Sigmoid colon (tissue), 7 donors: ENCODE measurements at regions of chr5 and their contacts with region 1.

Region 1: DNA sequence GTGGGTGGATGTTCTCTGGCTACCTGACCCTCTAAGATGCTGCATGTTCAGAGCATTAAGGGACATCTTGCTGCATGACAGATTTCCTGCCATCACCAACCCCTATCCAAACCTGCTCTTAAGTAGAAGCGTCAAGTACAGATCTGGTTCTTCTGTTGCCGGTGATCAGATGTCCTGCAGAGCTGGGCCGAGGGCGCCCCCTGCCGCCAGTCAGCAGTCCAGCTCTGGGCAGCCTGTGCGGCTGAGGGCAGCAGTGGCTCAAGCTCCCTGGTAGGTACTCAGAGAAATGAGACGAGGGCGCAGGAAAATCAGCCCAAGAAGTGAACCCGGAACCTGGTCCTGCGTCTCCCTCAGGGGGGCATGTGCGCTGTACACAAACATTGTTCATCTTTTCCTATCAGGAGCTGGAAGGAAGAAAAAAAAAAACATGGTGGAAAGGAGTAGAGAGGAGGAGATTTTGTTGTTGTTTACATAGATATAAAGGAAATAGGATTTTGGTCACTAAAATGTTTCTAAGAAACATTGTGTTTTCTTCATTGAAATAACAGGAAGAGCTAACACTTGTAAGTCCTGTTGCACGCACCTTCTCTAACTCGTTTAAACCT is 95.8 kb downstream of the CFAP90 start:
- DNase-seq: no peak
- H3K4me3 ChIP-seq: no peak overlapping the region
- H3K27ac ChIP-seq: no peak overlapping the region
- H3K4me1 ChIP-seq: no peaks in the 10 kb centered on the region
- H3K27me3 ChIP-seq: no peaks in the 10 kb centered on the region
- CTCF ChIP-seq: peak; percentile 41 to 65 (median 47)
- EP300 ChIP-seq: no peak
- POLR2A ChIP-seq: no peak

Region 2: GRCh38 chr5:7251132-7251531 is 504.0 kb before region 1 on chr5:
- intact Hi-C with region 1: loop called (anchors 5 kb)
- DNase-seq: no peak
- H3K4me3 ChIP-seq: no peak overlapping the region
- H3K27ac ChIP-seq: peak overlapping the region in 1 of 4 donors; percentile 22
- H3K4me1 ChIP-seq: no peaks in the 10 kb centered on the region
- H3K27me3 ChIP-seq: no peaks in the 10 kb centered on the region
- CTCF ChIP-seq: no peak
- EP300 ChIP-seq: no peak
- POLR2A ChIP-seq: no peak

Region 3: DNA sequence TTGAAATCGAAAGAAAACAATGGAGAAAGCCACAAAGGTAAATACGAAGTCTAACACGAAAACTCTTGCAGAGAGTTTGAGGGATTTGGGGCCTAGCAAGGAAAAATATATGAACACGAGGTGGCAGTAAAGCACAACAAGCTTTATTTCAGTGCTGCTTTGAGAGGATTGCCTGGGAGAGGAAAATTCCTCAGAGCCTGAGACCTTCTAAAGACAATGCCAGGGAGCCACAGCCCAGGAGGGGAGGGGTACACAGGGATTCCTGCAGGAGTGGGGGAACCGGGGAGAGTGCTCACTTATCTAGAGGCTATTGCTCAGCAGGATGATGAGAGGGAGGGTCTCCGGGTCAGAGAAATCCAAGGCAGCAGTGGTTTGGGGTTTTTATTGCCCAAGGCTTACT is 494.0 kb before region 1 on chr5:
- intact Hi-C with region 1: loop called (anchors 5 kb)
- DNase-seq: no peak
- H3K4me3 ChIP-seq: no peak overlapping the region
- H3K27ac ChIP-seq: no peak overlapping the region
- H3K4me1 ChIP-seq: no peaks in the 10 kb centered on the region
- H3K27me3 ChIP-seq: no peaks in the 10 kb centered on the region
- CTCF ChIP-seq: peak; percentile 10 to 51 (median 34)
- EP300 ChIP-seq: no peak
- POLR2A ChIP-seq: no peak

Region 4: DNA sequence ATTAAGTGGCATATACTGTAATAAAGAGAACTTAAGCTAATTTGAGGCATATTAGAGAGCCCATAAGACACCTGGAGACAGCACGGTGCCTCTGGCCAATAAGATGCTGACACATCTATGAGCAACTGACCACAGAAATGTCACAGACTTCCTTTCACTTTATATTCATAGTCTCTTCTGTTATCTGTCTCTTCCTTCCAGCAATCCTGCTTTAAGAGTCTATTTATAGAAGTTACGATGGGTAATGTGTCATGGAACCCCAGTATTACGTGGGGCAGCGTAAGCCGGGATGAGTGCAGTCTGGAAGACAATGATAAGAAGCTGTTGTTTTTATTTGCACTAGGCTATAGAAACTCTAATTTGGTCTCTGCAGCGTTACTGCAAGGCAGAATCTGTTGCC is 41.0 kb before region 1 on chr5:
- intact Hi-C with region 1: no loop called
- DNase-seq: no peak
- H3K4me3 ChIP-seq: no peak overlapping the region
- H3K27ac ChIP-seq: no peak overlapping the region
- H3K4me1 ChIP-seq: no peaks in the 10 kb centered on the region
- H3K27me3 ChIP-seq: no peaks in the 10 kb centered on the region
- CTCF ChIP-seq: no peak
- EP300 ChIP-seq: no peak
- POLR2A ChIP-seq: no peak

Region 5: GRCh38 chr5:8660133-8660893 is 905.2 kb after region 1 on chr5:
- intact Hi-C with region 1: no loop called
- DNase-seq: no peak
- H3K4me3 ChIP-seq: no peak overlapping the region
- H3K27ac ChIP-seq: no peak overlapping the region
- H3K4me1 ChIP-seq: no peaks in the 10 kb centered on the region
- H3K27me3 ChIP-seq: no peaks in the 10 kb centered on the region
- CTCF ChIP-seq: no peak
- EP300 ChIP-seq: no peak
- POLR2A ChIP-seq: no peak